B cell (primary cell): ENCODE measurements at regions of chr1 and their contacts with region 1.

Region 1: GRCh38 chr1:113859478-113860175 is 11.9 kb downstream of the PTPN22 start:
- DNase-seq: peak; percentile 79
- ATAC-seq: peak; percentile 80
- H3K4me3 ChIP-seq: peak overlapping the region; percentile 5 to 58 (median 31)
- H3K4me3 Mint-ChIP-seq: peak overlapping the region; percentile 72
- H3K27ac ChIP-seq: peak overlapping the region; percentile 73 to 80
- H3K27ac Mint-ChIP-seq: peak overlapping the region; percentile 92
- H3K4me1 ChIP-seq: peaks cover 58 to 60% of the 10 kb centered on the region in 2 donors
- H3K4me1 Mint-ChIP-seq: peaks cover 58% of the 10 kb centered on the region
- H3K27me3 ChIP-seq: no peaks in the 10 kb centered on the region
- H3K27me3 Mint-ChIP-seq: no peaks in the 10 kb centered on the region
- CTCF ChIP-seq: no peak

Region 2: GRCh38 chr1:113928941-113929749 is 69.5 kb after region 1 on chr1 and contains the start of gene HIPK1:
- CTCF ChIA-PET with region 1: interaction called, 6 read pairs
- POLR2A ChIA-PET with region 1: no interaction called
- intact Hi-C with region 1: loop called (anchors 2 kb)
- DNase-seq: peak; percentile 96
- ATAC-seq: peak; percentile 75
- H3K4me3 ChIP-seq: peak within 1 kb of the TSS; percentile 76 to 92 (median 86)
- H3K4me3 Mint-ChIP-seq: peak within 1 kb of the TSS; percentile 100
- H3K27ac ChIP-seq: peak within 1 kb of the TSS; percentile 98 to 99
- H3K27ac Mint-ChIP-seq: peak within 1 kb of the TSS; percentile 100
- H3K4me1 ChIP-seq: peaks cover 33 to 35% of the 10 kb centered on the region in 2 donors
- H3K4me1 Mint-ChIP-seq: peaks cover 49% of the 10 kb centered on the region
- H3K27me3 ChIP-seq: no peaks in the 10 kb centered on the region
- H3K27me3 Mint-ChIP-seq: no peaks in the 10 kb centered on the region
- CTCF ChIP-seq: no peak
- total RNA-seq, gene HIPK1: 48.0 and 48.2 TPM in 2 replicates